ENCODE measurements at regions of chr4 and their contacts with region 1.

Region 1: DNA sequence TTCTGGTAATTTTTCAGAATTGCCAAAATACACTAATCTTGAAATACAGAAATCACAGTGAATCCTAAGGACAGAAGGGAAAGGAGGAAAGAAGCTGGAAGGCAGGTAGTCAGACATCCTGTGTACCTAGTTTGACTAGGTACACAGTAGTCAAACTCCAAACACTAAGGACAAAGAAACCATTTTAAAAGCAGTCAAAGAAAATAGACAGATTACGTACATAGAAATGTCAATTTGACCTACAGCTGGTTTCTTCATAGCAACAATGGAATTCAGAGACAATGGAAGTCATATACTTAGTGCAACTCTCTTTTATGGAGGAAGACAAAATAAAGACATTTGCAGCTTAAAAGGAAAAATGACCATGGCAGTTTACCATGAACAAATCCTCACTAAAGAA is 79.0 kb downstream of the NEUROG2 start:
- DNase-seq: no peak
- ATAC-seq: no peak
- H3K4me3 ChIP-seq: no peak overlapping the region
- H3K27ac ChIP-seq: no peak overlapping the region
- H3K4me1 ChIP-seq: no peaks in the 10 kb centered on the region
- H3K27me3 ChIP-seq: no peaks in the 10 kb centered on the region
- CTCF ChIP-seq: no peak
- POLR2A ChIP-seq: no peak
- RAD21 ChIP-seq: no peak

Region 2: DNA sequence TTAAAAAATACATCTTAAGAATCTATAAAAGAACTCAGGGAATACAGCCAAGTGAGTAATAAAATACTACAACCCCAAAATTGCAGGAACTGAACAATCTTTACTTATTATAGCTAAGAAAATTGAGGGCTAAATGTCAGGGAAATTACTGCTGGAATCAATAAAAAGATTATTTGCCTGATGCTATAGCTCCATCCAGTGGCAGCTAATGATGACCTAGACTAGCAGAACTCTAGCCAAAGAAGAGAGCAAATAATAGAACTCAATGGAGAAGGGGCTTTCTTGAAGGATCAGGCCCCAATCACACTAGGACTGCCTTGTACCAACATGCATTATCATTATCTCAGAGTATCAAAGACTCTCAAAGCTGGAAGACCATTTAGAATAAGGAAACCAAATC is 376.7 kb before region 1 on chr4:
- CTCF ChIA-PET with region 1: no interaction called
- POLR2A ChIA-PET with region 1: no interaction called
- dilution Hi-C with region 1: no loop called
- in situ Hi-C with region 1: no loop called
- intact Hi-C with region 1: no loop called
- DNase-seq: peak; percentile 17
- ATAC-seq: no peak
- H3K4me3 ChIP-seq: no peak overlapping the region
- H3K27ac ChIP-seq: no peak overlapping the region
- H3K4me1 ChIP-seq: no peaks in the 10 kb centered on the region
- H3K27me3 ChIP-seq: peaks cover 2% of the 10 kb centered on the region; the same call in 1 of the 2 replicates
- CTCF ChIP-seq: peak; percentile 39
- POLR2A ChIP-seq: no peak
- RAD21 ChIP-seq: peak; percentile 36

Region 3: GRCh38 chr4:112075129-112075753 is 361.7 kb before region 1 on chr4:
- CTCF ChIA-PET with region 1: no interaction called
- POLR2A ChIA-PET with region 1: no interaction called
- dilution Hi-C with region 1: no loop called
- in situ Hi-C with region 1: no loop called
- intact Hi-C with region 1: no loop called
- DNase-seq: peak; percentile 66
- ATAC-seq: peak; percentile 95
- H3K4me3 ChIP-seq: no peak overlapping the region
- H3K27ac ChIP-seq: no peak overlapping the region
- H3K4me1 ChIP-seq: no peaks in the 10 kb centered on the region
- H3K27me3 ChIP-seq: no peaks in the 10 kb centered on the region
- CTCF ChIP-seq: peak; percentile 62
- POLR2A ChIP-seq: no peak
- RAD21 ChIP-seq: peak; percentile 51

Region 4: GRCh38 chr4:112451831-112452230 is 14.9 kb after region 1 on chr4:
- CTCF ChIA-PET with region 1: interaction called, 3 read pairs
- POLR2A ChIA-PET with region 1: no interaction called
- dilution Hi-C with region 1: no loop called
- in situ Hi-C with region 1: no loop called
- intact Hi-C with region 1: loop called (anchors 2 kb)
- DNase-seq: no peak
- ATAC-seq: no peak
- H3K4me3 ChIP-seq: no peak overlapping the region
- H3K27ac ChIP-seq: no peak overlapping the region
- H3K4me1 ChIP-seq: no peaks in the 10 kb centered on the region
- H3K27me3 ChIP-seq: no peaks in the 10 kb centered on the region
- CTCF ChIP-seq: no peak
- POLR2A ChIP-seq: no peak
- RAD21 ChIP-seq: no peak